A549 (cell line): ENCODE measurements at regions of chrX and their contacts with region 1.

Region 1: DNA sequence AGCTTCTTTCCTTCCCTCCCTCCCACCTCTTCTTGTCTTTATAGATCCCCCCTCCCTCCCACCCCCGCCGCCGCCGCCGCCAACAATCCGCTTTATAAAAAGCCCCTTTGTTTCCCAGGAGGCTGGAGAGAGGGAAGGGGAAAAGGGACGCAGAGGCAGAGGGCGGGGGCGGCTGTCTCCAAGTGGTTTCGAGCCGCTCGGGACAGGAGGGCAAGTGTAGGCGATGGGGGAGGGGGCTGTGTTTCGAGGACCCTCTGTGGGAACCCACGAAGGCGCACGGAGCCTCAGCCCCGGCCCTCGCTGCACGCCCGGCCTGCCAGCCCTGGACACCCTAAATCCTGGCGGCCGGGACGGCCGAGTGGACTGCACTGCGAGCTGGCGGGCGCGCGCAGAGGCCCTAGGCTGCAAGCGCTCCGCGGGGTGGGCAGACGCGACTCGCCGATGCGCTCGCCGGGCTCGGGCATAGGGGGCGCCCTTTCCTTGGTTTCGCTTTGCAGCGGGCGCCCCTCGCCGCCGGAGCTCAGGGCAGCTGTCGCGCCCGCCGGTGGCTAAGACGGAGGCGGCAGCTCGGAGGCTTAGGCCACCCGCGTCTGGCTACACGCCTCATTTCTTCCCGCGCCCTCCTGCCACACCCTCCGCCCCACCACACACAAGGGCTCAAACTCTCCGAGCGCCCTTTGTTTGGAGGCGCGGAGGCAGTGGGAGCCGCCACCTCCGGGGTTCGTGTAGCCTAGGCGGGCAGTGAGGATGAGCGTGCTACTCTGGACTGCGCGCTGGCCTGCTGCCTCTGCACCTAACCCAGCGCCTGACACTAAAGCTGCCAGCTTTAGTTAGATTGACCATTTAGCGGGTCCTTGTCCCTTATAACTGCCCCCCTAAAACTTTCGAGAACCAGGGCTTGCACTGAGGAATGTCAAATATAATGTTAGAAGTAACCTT is 2.2 kb downstream of the MAMLD1 start:
- DNase-seq: peak; percentile 31 to 80
- ATAC-seq: peak; percentile 35 to 63
- H3K4me3 ChIP-seq: peak overlapping the region; percentile 66
- H3K27ac ChIP-seq: peak overlapping the region; percentile 69 to 90
- H3K4me1 ChIP-seq: peaks cover 23% of the 10 kb centered on the region
- CTCF ChIP-seq: peak; percentile 70
- EP300 ChIP-seq: no peak
- POLR2A ChIP-seq: peak; percentile 19; the same call in 1 of the 2 replicates
- RAD21 ChIP-seq: peak; percentile 38 to 72; a peak in 4 of 5 replicates

Region 2: DNA sequence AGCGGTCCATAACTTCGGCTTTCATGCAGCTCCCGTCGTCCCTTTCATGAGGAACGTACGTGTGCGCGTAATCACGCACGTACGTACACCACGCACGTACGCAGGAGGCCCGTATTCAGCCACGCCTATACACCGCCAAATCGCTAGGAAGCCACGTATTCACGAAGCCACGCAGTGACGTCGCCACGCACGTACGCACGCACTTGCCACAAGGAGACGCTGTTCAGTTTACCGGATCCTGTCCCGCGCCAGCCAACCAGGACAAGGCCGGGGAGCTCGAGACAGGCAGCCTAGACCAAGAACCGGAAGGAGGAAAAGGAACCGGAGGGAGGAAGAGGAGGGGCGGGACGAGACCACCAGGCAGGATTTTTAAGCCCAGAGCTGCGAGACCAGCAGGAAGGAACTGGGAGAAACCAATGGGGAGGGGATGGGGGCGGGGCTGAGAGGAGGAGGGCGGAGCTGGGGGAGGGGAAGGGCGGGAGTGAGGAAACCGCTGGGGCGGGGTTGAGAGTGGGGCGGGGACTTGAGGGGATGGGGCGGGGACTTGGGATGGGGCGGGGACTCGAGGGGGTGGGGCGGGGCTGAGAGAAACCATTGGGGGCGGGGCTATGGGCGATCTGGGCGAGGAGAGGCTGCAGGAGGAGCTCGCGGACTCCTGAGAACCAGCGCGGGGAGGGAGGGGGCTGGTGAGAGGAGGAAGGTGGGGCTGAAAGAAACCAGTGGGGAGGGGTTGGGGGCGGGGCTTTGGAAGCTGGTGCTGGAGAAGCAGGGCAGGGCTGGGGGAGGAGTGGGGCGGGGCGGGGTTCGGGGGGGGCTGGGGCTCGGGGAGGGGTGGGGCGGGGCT is 426.7 kb before region 1 on chrX and contains the start of gene EOLA2:
- CTCF ChIA-PET with region 1: interaction called, 3 read pairs
- POLR2A ChIA-PET with region 1: interaction called, 28 read pairs
- DNase-seq: peak; percentile 67 to 99
- ATAC-seq: peak; percentile 78 to 80
- H3K4me3 ChIP-seq: peak within 1 kb of the TSS; percentile 81
- H3K27ac ChIP-seq: peak within 1 kb of the TSS; percentile 97 to 98
- H3K4me1 ChIP-seq: peaks cover 4% of the 10 kb centered on the region; the same call in 1 of the 3 replicates
- CTCF ChIP-seq: peak; percentile 31; the same call in 2 of the 3 replicates
- EP300 ChIP-seq: no peak
- POLR2A ChIP-seq: peak; percentile 38
- RAD21 ChIP-seq: no peak
- polyA plus RNA-seq, gene EOLA2: 60.9 and 61.7 TPM in 2 replicates

Region 3: GRCh38 chrX:149950681-149951080 is 414.6 kb before region 1 on chrX:
- CTCF ChIA-PET with region 1: interaction called, 13 read pairs
- POLR2A ChIA-PET with region 1: no interaction called
- DNase-seq: peak; percentile 40 to 55
- ATAC-seq: peak; percentile 63 to 82; a peak in 4 of 6 replicates
- H3K4me3 ChIP-seq: no peak overlapping the region
- H3K27ac ChIP-seq: no peak overlapping the region
- H3K4me1 ChIP-seq: no peaks in the 10 kb centered on the region
- CTCF ChIP-seq: peak; percentile 61
- EP300 ChIP-seq: no peak
- POLR2A ChIP-seq: no peak
- RAD21 ChIP-seq: peak; percentile 54 to 64

Region 4: DNA sequence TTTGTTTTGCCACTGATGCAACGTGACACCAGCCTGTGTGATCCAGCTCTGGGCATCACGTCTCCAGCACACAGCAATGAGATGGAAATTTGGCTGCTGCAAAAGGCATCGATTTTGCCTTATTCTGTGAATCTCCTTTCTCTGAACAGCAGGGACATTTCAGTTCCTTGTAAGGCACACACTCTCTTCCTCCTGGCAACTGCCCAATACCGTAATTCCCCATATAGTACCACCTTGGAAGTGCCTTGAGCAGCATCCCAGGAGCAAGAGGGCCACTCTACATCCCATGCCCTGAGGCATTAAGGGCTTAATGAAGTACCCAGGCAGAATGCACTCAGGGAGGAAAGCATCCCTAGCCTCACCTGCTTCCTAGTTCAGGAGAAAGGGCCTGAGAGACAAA is 12.7 kb before region 1 on chrX:
- CTCF ChIA-PET with region 1: interaction called, 11 read pairs
- POLR2A ChIA-PET with region 1: no interaction called
- DNase-seq: no peak
- ATAC-seq: no peak
- H3K4me3 ChIP-seq: no peak overlapping the region
- H3K27ac ChIP-seq: no peak overlapping the region
- H3K4me1 ChIP-seq: no peaks in the 10 kb centered on the region
- CTCF ChIP-seq: no peak
- EP300 ChIP-seq: no peak
- POLR2A ChIP-seq: no peak
- RAD21 ChIP-seq: no peak

Region 5: DNA sequence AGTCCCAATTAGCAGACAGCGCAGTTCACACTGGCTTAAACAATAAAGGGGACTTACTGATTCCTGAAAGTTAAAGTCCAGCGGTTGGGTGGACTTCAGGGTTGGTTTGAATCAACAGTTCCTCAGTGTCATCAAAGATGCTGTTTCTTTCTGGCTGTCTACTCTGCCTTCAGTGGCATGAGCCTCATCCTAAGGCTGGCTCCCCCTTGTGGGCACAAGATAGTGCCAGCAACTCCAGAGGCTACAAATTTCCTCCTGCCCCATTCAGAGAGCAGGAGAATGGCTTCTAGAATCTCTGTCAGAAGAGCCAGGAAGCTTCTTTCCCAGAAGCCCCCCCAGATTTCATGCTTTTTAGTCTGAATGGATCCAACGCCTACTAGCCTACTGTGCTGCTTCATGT is 120.7 kb after region 1 on chrX:
- CTCF ChIA-PET with region 1: interaction called, 48 read pairs
- POLR2A ChIA-PET with region 1: interaction called, 3 read pairs
- DNase-seq: peak; percentile 45 to 62
- ATAC-seq: peak; percentile 88 to 96
- H3K4me3 ChIP-seq: no peak overlapping the region
- H3K27ac ChIP-seq: no peak overlapping the region
- H3K4me1 ChIP-seq: peaks cover 12% of the 10 kb centered on the region
- CTCF ChIP-seq: peak; percentile 58
- EP300 ChIP-seq: no peak
- POLR2A ChIP-seq: no peak
- RAD21 ChIP-seq: peak; percentile 60 to 64